Thyroid gland (tissue), 4 donors: ENCODE measurements at regions of chr7 and their contacts with region 1.

Region 1: DNA sequence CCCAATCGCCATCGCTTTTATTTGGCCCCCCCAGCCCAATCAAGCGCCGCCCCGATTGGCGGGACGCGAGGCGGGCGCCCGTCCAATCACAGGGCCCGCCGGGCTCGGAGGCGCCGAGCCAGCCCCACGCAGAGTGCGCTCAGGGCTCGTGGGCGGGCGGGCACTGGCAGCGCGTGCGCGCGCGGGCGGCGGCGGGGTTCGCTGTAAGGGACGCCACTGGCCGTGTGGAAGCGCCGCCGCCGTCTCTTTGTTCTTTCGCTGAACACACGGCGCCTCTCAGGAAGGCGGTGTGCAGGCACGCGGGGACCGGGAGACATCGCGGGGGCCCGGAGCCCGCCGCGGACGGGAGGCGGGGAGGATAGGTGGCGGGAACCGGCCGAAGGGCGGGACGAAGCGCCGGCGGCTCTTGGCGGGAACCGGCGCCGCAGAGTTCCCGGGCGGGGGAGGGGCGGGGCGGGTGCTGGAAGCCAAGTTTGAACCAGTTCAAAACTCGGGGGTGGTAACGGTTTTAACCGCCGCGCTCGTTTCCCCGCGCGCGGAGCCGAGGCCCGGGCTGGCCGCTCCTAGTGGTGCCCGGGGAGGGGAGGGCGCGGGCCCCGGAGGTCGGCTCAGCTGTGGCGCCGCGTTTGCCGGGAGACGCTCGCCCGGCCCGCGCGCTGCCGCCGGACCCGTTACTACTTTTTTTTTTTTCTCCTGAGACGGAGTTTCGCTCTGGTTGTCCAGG is 370 bp upstream of the EZH2 start:
- DNase-seq: peak; percentile 90 to 91
- H3K4me3 ChIP-seq: peak overlapping the region; percentile 54 to 95 (median 75)
- H3K27ac ChIP-seq: peak overlapping the region; percentile 62 to 93 (median 88)
- H3K4me1 ChIP-seq: peaks cover 0 to 3% of the 10 kb centered on the region in 2 donors
- H3K27me3 ChIP-seq: no peaks in the 10 kb centered on the region
- CTCF ChIP-seq: no peak
- POLR2A ChIP-seq: peak in 1 of 2 donors; percentile 66

Region 2: GRCh38 chr7:148447221-148447849 is 437.1 kb before region 1 on chr7:
- intact Hi-C with region 1: no loop called
- DNase-seq: no peak
- H3K4me3 ChIP-seq: no peak overlapping the region
- H3K27ac ChIP-seq: no peak overlapping the region
- H3K4me1 ChIP-seq: no peaks in the 10 kb centered on the region
- H3K27me3 ChIP-seq: no peaks in the 10 kb centered on the region
- CTCF ChIP-seq: no peak
- POLR2A ChIP-seq: no peak

Region 3: GRCh38 chr7:148623586-148624282 is 260.7 kb before region 1 on chr7:
- intact Hi-C with region 1: no loop called
- DNase-seq: peak; percentile 53
- H3K4me3 ChIP-seq: no peak overlapping the region
- H3K27ac ChIP-seq: no peak overlapping the region
- H3K4me1 ChIP-seq: no peaks in the 10 kb centered on the region
- H3K27me3 ChIP-seq: no peaks in the 10 kb centered on the region
- CTCF ChIP-seq: no peak
- POLR2A ChIP-seq: no peak

Region 4: GRCh38 chr7:148698397-148699023 is 186.0 kb before region 1 on chr7 and contains the start of gene CUL1:
- intact Hi-C with region 1: loop called (anchors 10 kb)
- DNase-seq: peak; percentile 87 to 89
- H3K4me3 ChIP-seq: peak within 1 kb of the TSS; percentile 76 to 92 (median 78)
- H3K27ac ChIP-seq: peak within 1 kb of the TSS; percentile 95 to 97 (median 97)
- H3K4me1 ChIP-seq: peaks cover 31 to 32% of the 10 kb centered on the region in 2 donors
- H3K27me3 ChIP-seq: no peaks in the 10 kb centered on the region
- CTCF ChIP-seq: no peak
- POLR2A ChIP-seq: peak in 1 of 2 donors; percentile 80
- total RNA-seq, gene CUL1: 51.3 to 53.4 (median 52.9) TPM

Region 5: GRCh38 chr7:148712678-148713329 is 171.7 kb before region 1 on chr7:
- intact Hi-C with region 1: no loop called
- DNase-seq: no peak
- H3K4me3 ChIP-seq: no peak overlapping the region
- H3K27ac ChIP-seq: no peak overlapping the region
- H3K4me1 ChIP-seq: peaks cover 19 to 20% of the 10 kb centered on the region in 2 donors
- H3K27me3 ChIP-seq: no peaks in the 10 kb centered on the region
- CTCF ChIP-seq: no peak
- POLR2A ChIP-seq: no peak

Region 6: GRCh38 chr7:148940702-148941597 is 56.5 kb after region 1 on chr7:
- intact Hi-C with region 1: loop called (anchors 10 kb)
- DNase-seq: peak; percentile 83 to 87
- H3K4me3 ChIP-seq: peak overlapping the region; percentile 15 to 75 (median 67)
- H3K27ac ChIP-seq: peak overlapping the region; percentile 65 to 89 (median 87)
- H3K4me1 ChIP-seq: peaks cover 0 to 5% of the 10 kb centered on the region in 2 donors
- H3K27me3 ChIP-seq: no peaks in the 10 kb centered on the region
- CTCF ChIP-seq: peak in 1 of 6 experiments; percentile 2
- POLR2A ChIP-seq: peak in 1 of 2 donors; percentile 49